ENCODE measurements at regions of chr2 and their contacts with region 1.

Region 1: DNA sequence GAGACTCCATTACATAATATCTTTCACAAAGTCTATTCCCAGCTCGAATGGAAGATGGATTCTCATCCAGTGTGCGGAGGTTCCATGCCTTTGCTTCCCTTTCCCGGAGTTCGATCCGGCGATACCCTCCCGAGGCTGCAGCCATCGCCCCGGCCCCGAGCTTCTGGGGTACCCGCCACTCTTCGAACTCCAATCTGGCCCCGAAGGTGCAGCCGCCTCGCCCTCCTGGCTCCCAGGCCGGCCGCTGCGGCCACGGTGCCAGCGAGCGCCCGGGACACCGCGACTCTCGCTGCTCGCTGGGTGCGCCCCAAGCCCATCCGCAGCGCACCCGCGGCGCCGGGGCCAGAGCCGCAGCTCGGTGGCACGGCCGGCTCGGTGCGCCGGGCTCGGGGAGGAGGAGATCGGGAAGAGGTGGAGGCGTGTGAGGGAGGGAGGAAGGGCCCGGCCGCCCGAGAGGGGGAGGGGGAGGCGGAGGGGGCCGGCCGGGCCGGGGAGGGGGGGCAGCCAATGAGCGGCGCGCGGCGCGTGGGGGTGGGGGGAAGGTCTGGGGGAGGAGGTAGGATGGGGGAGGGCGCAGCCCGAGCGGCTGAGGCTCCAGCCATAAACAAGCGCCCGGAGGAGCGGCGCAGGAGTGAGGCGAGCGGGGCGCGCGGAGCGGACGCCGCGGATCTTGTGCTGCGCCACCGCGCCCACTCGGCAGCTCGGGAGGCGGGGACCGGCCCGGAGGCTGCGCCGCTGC is at the start of gene CRIM1:
- DNase-seq: peak; percentile 93
- total RNA-seq, gene CRIM1: 125 TPM

Region 2: GRCh38 chr2:35920019-35920418 is 435.3 kb before region 1 on chr2:
- intact Hi-C with region 1: no loop called
- DNase-seq: no peak

Region 3: DNA sequence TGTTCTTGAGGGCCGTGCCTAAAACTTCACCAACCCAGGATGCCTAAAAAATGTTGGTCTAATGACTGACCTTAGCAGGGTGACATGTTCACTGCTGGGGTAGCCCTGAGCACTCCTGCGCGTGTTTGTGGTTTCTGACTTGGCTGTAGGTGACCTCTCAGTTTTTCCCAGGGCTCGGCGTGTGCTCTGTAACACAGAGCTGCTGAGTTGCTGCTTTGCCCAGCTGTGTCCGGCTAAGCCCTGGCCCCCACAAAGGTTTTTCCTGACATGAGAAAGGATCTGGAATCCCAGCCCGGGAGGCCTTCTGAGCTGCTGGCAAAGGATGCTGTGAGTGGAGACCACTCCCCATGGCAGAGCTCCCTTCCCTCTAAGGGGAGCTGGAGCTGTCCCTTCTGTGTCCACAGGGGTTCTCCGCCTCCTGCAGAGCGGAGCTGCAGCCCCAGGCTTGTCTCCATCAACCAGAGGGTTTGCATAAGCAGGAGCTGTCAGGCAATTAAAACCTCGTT is 52.9 kb after region 1 on chr2:
- intact Hi-C with region 1: loop called (anchors 2 kb)
- DNase-seq: no peak

Region 4: DNA sequence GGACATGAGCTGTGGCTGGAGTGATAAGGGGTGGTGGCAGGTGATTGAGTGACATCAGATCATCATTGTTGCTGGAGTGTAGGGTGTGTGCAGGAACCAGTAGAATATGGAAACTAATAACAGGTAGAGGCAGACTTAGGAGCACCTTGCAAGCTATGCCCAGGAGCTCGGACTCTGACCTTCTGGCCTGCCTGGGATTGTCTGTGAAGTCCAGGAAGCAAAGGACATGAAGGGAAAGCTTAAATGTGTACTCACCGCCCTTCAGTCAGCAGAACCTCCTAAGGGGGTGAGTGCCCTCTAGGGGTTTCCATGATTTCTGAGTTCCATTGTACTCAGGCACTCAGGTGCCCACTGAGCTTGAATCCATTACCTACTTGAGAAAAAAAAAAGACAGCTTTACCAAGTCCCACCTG is 104.4 kb after region 1 on chr2:
- intact Hi-C with region 1: loop called (anchors 1 kb)
- DNase-seq: no peak

Region 5: DNA sequence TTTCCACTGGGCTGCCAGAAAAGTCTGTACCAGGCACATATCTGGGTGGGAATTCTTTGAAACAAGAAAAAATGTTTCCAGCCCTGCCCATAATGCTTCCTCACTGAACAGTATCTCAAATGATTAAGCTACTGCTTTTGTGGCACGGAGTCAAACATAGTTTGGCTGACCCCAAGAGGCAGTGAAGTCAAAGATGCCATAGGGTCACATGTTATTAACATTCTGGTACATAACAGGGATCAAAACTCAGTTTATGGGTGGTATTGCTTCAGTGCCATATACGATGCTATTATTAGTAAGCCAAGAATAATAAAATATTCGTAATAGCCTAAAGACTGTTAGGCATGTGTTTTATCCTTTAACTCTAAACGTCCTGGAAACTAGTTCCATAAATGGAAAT is 130.2 kb after region 1 on chr2:
- intact Hi-C with region 1: loop called (anchors 2 kb)
- DNase-seq: no peak

Region 6: DNA sequence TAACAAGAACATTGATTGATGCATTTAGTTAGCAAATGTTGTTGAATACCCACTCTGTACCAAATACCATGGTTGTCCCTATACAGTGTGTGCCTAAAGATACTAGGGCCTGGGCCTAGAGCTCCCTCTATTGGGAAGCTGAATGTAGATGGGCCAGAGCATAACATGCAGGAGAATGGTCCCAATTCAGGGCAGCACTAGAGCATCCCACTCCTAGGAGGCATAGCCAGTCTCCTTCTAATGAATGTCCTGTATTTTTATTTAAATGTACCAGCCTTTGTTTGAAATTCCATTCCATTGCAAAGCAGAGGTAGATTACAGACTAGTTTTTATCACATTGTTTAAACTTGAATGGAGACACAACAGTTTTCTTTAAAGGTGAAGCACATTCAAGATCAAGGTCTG is 152.1 kb after region 1 on chr2:
- intact Hi-C with region 1: loop called (anchors 1 kb)
- DNase-seq: no peak

Region 7: GRCh38 chr2:36597532-36598377 is 242.4 kb after region 1 on chr2 and contains the start of gene FEZ2:
- intact Hi-C with region 1: loop called (anchors 5 kb)
- DNase-seq: peak; percentile 90
- total RNA-seq, gene FEZ2: 50.5 TPM

Region 8: GRCh38 chr2:36663851-36664695 is 308.8 kb after region 1 on chr2:
- intact Hi-C with region 1: loop called (anchors 5 kb)
- DNase-seq: no peak